ENCODE measurements at regions of chr3 and their contacts with region 1.

Region 1: DNA sequence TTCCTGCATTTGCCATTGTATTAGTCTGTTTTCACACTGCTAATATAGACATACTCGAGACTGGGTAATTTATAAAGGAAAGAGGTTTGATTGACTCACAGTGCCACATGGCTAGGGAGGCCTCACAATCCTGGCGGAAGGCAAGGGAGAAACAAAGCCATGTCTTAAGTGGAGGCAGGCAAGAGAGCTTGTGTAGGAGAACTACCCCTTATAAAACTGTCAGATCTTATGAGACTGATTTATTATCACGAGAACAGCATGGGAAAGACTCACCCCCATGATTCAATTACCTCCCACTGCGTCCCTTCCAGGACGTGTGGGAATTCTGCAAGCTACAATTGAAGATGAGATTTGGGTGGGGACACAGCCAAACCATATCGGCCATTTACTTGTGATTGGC is 27.8 kb downstream of the YEATS2 start:
- DNase-seq: no peak
- ATAC-seq: no peak
- H3K4me3 ChIP-seq: no peak overlapping the region
- H3K27ac ChIP-seq: no peak overlapping the region
- H3K4me1 ChIP-seq: no peaks in the 10 kb centered on the region
- H3K27me3 ChIP-seq: no peaks in the 10 kb centered on the region
- CTCF ChIP-seq: no peak
- POLR2A ChIP-seq: no peak
- RAD21 ChIP-seq: no peak

Region 2: GRCh38 chr3:183775781-183776180 is 50.4 kb after region 1 on chr3:
- CTCF ChIA-PET with region 1: no interaction called
- POLR2A ChIA-PET with region 1: no interaction called
- dilution Hi-C with region 1: no loop called
- in situ Hi-C with region 1: no loop called
- intact Hi-C with region 1: loop called (anchors 10 kb)
- DNase-seq: no peak
- ATAC-seq: no peak
- H3K4me3 ChIP-seq: no peak overlapping the region
- H3K27ac ChIP-seq: peak overlapping the region; percentile 32; the same call in 1 of the 2 replicates
- H3K4me1 ChIP-seq: peaks cover 12% of the 10 kb centered on the region; the same call in 1 of the 2 replicates
- H3K27me3 ChIP-seq: no peaks in the 10 kb centered on the region
- CTCF ChIP-seq: no peak
- POLR2A ChIP-seq: no peak
- RAD21 ChIP-seq: no peak

Region 3: DNA sequence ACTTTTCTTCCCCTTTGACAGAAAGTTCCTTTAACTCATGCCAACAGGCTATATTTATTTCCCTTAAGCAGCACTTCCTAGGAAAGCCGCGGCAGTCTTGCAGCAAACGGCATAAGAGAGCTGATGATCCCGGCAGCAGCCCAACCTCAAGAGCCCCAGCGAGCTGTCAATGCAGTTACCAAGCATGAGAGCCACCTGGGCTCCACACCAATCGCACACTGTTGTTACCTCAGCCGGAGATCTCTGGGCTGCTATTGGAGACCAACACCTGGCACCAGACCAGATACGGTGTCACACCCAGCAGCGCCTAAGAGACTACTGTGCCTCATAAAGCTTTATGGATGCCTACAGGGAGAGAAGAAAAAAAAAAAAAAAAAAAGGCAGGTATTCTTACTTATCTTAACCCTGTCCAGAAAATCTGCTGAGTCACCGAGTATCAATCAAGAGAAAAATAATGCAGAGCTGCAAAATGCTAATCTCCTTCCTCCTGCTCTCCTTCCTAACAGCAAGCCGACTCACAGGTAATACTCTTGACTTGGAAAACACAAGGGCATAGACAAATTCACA is 280.6 kb after region 1 on chr3:
- CTCF ChIA-PET with region 1: no interaction called
- POLR2A ChIA-PET with region 1: no interaction called
- dilution Hi-C with region 1: no loop called
- in situ Hi-C with region 1: no loop called
- intact Hi-C with region 1: no loop called
- DNase-seq: peak; percentile 37
- ATAC-seq: no peak
- H3K4me3 ChIP-seq: no peak overlapping the region
- H3K27ac ChIP-seq: peak overlapping the region; percentile 26; the same call in 1 of the 2 replicates
- H3K4me1 ChIP-seq: peaks cover 22% of the 10 kb centered on the region
- H3K27me3 ChIP-seq: no peaks in the 10 kb centered on the region
- CTCF ChIP-seq: no peak
- POLR2A ChIP-seq: no peak
- RAD21 ChIP-seq: no peak

Measured in IMR-90 (cell line).